ENCODE measurements at regions of chr13 and their contacts with region 1.

Region 1: GRCh38 chr13:52968074-52968700 is 60.4 kb upstream of the OLFM4 start:
- DNase-seq: peak; percentile 83
- H3K4me3 Mint-ChIP-seq: no peak overlapping the region
- H3K27ac Mint-ChIP-seq: no peak overlapping the region
- H3K4me1 Mint-ChIP-seq: no peaks in the 10 kb centered on the region
- H3K27me3 Mint-ChIP-seq: no peaks in the 10 kb centered on the region
- CTCF ChIP-seq: peak; percentile 92

Region 2: GRCh38 chr13:52617070-52618060 is 350.8 kb before region 1 on chr13:
- CTCF ChIA-PET with region 1: no interaction called
- intact Hi-C with region 1: loop called (anchors 5 kb)
- DNase-seq: peak; percentile 89
- H3K4me3 Mint-ChIP-seq: peak overlapping the region; percentile 97
- H3K27ac Mint-ChIP-seq: peak overlapping the region; percentile 87
- H3K4me1 Mint-ChIP-seq: no peaks in the 10 kb centered on the region
- H3K27me3 Mint-ChIP-seq: no peaks in the 10 kb centered on the region
- CTCF ChIP-seq: no peak

Region 3: GRCh38 chr13:52665325-52665724 is 302.9 kb before region 1 on chr13:
- CTCF ChIA-PET with region 1: interaction called, 20 read pairs
- intact Hi-C with region 1: loop called (anchors 2 kb)
- DNase-seq: no peak
- H3K4me3 Mint-ChIP-seq: no peak overlapping the region
- H3K27ac Mint-ChIP-seq: no peak overlapping the region
- H3K4me1 Mint-ChIP-seq: no peaks in the 10 kb centered on the region
- H3K27me3 Mint-ChIP-seq: no peaks in the 10 kb centered on the region
- CTCF ChIP-seq: peak; percentile 8

Region 4: GRCh38 chr13:52707375-52707774 is 260.8 kb before region 1 on chr13:
- CTCF ChIA-PET with region 1: no interaction called
- intact Hi-C with region 1: loop called (anchors 10 kb)
- DNase-seq: no peak
- H3K4me3 Mint-ChIP-seq: no peak overlapping the region
- H3K27ac Mint-ChIP-seq: no peak overlapping the region
- H3K4me1 Mint-ChIP-seq: no peaks in the 10 kb centered on the region
- H3K27me3 Mint-ChIP-seq: no peaks in the 10 kb centered on the region
- CTCF ChIP-seq: no peak

Region 5: GRCh38 chr13:52850396-52851136 is 117.6 kb before region 1 on chr13:
- CTCF ChIA-PET with region 1: no interaction called
- intact Hi-C with region 1: loop called (anchors 5 kb)
- DNase-seq: peak; percentile 73
- H3K4me3 Mint-ChIP-seq: peak overlapping the region; percentile 78
- H3K27ac Mint-ChIP-seq: no peak overlapping the region
- H3K4me1 Mint-ChIP-seq: peaks cover 21% of the 10 kb centered on the region
- H3K27me3 Mint-ChIP-seq: peaks cover 65% of the 10 kb centered on the region
- CTCF ChIP-seq: no peak

Region 6: GRCh38 chr13:52994051-52994450 is 25.9 kb after region 1 on chr13:
- CTCF ChIA-PET with region 1: no interaction called
- intact Hi-C with region 1: no loop called
- DNase-seq: no peak
- H3K4me3 Mint-ChIP-seq: no peak overlapping the region
- H3K27ac Mint-ChIP-seq: no peak overlapping the region
- H3K4me1 Mint-ChIP-seq: no peaks in the 10 kb centered on the region
- H3K27me3 Mint-ChIP-seq: no peaks in the 10 kb centered on the region
- CTCF ChIP-seq: no peak

Region 7: GRCh38 chr13:53151336-53152056 is 183.3 kb after region 1 on chr13:
- CTCF ChIA-PET with region 1: interaction called, 11 read pairs
- intact Hi-C with region 1: loop called (anchors 10 kb)
- DNase-seq: peak; percentile 14
- H3K4me3 Mint-ChIP-seq: no peak overlapping the region
- H3K27ac Mint-ChIP-seq: no peak overlapping the region
- H3K4me1 Mint-ChIP-seq: no peaks in the 10 kb centered on the region
- H3K27me3 Mint-ChIP-seq: no peaks in the 10 kb centered on the region
- CTCF ChIP-seq: peak; percentile 40

Measured in Calu3 (cell line).